Activated T-helper 1 cell treated with anti-CD3 and anti-CD28 coated beads, Interleukin-12 subunit alpha, Interleukin-12 subunit beta, Interleukin-2, Interleukin-4 antibody, amounts not matched to agents 30 ng/mL and 10 ng/mL and 1 ng/mL, durations not matched to agents 14 hours and 24 hours and 36 hours (primary cell): ENCODE measurements at regions of chr1 and their contacts with region 1.

Region 1: DNA sequence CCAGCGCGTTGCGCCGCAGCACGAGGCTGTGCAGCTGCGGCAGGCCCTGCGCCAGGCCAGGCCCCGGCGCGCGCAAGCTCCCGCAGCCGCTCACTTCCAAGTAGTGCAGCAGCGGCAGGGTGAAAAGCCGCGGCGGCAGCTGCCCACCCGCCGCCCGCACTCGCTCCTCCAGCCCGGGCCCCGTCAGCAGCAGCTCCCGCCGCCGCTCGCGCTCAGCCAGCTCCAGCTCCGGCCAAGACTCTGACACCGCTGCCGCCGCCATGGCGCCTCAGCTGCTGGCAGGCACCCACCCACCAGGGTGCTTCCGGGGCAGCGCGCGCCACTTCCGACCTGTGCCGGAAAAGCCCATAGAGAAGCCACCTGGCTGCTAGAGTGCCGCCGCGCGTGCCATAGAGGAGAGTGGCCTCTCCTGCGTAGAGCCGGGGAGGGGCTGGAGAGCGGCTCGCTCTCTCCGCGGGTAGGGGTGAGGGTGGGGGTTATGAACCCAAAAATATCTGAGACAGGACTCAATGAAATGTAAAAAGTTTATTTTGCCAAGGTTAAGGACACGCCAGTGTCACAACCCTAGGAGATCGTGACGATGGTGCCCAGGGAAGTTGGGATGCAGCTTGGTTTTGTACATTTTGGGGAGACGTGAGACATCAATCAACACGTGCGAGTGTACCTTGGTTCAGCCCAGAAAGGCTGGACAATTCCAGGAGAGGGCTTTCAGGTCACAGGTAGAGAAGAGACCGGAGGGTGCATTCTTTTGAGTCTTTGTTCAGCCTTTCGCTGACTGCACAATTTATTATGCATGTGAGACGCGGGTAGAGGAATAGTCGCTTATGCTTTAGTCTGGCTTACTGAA is at the start of gene LRRC47:
- DNase-seq: peak; percentile 92
- H3K4me3 Mint-ChIP-seq: peak within 1 kb of the TSS; percentile 91
- H3K27ac Mint-ChIP-seq: peak within 1 kb of the TSS; percentile 89
- H3K4me1 Mint-ChIP-seq: peaks cover 42% of the 10 kb centered on the region
- H3K27me3 Mint-ChIP-seq: peaks cover 5% of the 10 kb centered on the region
- total RNA-seq, gene LRRC47: 45.2 and 50.1 TPM in 2 replicates

Region 2: GRCh38 chr1:3491291-3492246 is 304.9 kb before region 1 on chr1:
- intact Hi-C with region 1: loop called (anchors 5 kb)
- DNase-seq: peak; percentile 70
- H3K4me3 Mint-ChIP-seq: no peak overlapping the region
- H3K27ac Mint-ChIP-seq: no peak overlapping the region
- H3K4me1 Mint-ChIP-seq: no peaks in the 10 kb centered on the region
- H3K27me3 Mint-ChIP-seq: no peaks in the 10 kb centered on the region

Region 3: GRCh38 chr1:3624200-3625136 is 172.0 kb before region 1 on chr1 and contains the start of gene TPRG1L:
- intact Hi-C with region 1: loop called (anchors 1 kb)
- DNase-seq: peak; percentile 98
- H3K4me3 Mint-ChIP-seq: peak within 1 kb of the TSS; percentile 94
- H3K27ac Mint-ChIP-seq: peak within 1 kb of the TSS; percentile 93
- H3K4me1 Mint-ChIP-seq: peaks cover 27% of the 10 kb centered on the region
- H3K27me3 Mint-ChIP-seq: peaks cover 8% of the 10 kb centered on the region
- total RNA-seq, gene TPRG1L: 10.3 and 12.5 TPM in 2 replicates

Region 4: DNA sequence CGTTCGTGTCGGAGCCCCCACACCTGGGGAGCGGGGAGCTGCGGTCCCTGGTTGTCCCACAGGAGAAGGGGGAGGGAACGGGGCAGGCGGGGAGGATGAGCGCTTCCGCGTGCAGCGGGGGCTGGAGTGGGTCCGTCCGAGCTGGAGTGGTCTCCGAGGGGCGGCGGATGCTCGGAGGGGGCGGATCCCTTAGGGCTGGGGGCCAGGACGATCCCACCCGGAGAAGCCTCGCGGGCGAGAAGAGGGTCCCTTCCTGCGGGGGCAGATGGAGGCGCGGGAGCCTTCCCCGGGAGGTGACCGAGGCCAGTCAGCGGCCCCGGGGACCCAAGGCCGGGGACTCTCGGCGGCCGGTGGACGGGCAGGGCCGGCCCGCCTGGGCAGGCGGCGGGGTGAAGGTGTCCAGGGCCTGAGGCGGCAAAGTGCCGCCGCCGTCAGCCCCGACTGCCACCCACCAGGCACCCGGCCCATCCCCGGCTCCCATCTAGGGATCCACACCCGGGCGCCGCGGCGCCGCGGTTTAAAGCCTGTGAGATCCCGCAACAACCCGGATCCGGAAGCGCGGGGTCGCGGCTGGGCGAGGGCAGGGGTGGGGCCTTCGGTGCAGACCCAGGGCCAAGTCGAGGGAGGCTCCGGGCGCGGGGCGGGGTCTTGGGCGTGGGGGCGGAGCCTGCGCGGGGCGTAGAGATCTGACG is 49.5 kb before region 1 on chr1:
- intact Hi-C with region 1: loop called (anchors 2 kb)
- DNase-seq: peak; percentile 86
- H3K4me3 Mint-ChIP-seq: peak overlapping the region; percentile 84
- H3K27ac Mint-ChIP-seq: no peak overlapping the region
- H3K4me1 Mint-ChIP-seq: peaks cover 31% of the 10 kb centered on the region
- H3K27me3 Mint-ChIP-seq: peaks cover 2% of the 10 kb centered on the region

Region 5: GRCh38 chr1:3856908-3857790 is 60.7 kb after region 1 on chr1 and contains the starts of genes CEP104 and DFFB:
- intact Hi-C with region 1: loop called (anchors 1 kb)
- DNase-seq: peak; percentile 97
- H3K4me3 Mint-ChIP-seq: peak within 1 kb of the TSS; percentile 94
- H3K27ac Mint-ChIP-seq: peak within 1 kb of the TSS; percentile 83
- H3K4me1 Mint-ChIP-seq: peaks cover 15% of the 10 kb centered on the region
- H3K27me3 Mint-ChIP-seq: no peaks in the 10 kb centered on the region
- total RNA-seq, gene CEP104: 43.4 and 55.5 TPM in 2 replicates
- total RNA-seq, gene DFFB: 13.7 and 15.8 TPM in 2 replicates